ENCODE measurements at regions of chrX and their contacts with region 1.

Region 1: GRCh38 chrX:102950908-102951866 is 14.1 kb downstream of the RAB40AL start:
- DNase-seq: peak; percentile 23
- CTCF ChIP-seq: peak; percentile 59

Region 2: GRCh38 chrX:102899940-102900916 is 51.0 kb before region 1 on chrX:
- CTCF ChIA-PET with region 1: interaction called, 12 read pairs
- POLR2A ChIA-PET with region 1: no interaction called
- DNase-seq: peak; percentile 18
- CTCF ChIP-seq: peak; percentile 61

Region 3: GRCh38 chrX:102934624-102935023 is 16.6 kb before region 1 on chrX:
- CTCF ChIA-PET with region 1: interaction called, 34 read pairs
- POLR2A ChIA-PET with region 1: no interaction called
- DNase-seq: peak; percentile 42
- CTCF ChIP-seq: peak; percentile 52

Region 4: DNA sequence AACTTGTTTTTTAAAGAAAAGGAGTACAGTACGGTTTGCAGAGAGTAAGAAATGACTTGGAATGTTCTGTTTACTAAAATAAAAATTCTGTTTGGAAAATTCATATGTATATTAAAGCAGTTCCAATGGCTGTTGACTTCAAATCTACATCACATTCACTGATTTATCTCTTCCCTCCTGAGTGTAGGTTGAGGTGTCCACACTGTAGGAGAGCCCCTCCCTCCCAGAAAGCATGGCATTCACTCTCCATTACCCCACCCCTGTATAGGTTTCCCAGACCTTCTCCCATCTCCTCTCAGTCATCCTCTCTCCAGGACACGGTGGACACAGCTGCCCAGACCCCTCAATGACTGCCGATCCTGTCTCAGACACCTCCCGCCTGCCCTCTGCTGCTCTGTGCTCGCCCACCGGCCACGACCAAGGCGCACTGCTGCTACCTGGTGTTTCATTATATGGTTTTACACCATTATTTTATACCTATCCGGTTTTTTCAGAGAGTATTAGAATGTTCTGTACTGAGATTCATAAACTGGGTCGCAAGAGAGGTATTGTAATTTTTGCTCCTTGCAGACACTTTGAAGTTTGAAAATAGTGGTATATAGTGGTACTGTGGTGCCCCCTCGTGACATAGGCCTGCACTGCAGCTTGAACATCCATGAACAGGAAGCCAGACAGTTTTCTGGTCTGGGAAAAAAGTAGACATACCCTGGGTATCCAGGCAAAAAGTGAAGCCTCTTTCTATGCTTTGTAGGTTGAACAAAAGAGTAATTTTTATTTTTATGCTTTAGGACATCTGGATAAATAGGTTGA is 225.0 kb after region 1 on chrX:
- CTCF ChIA-PET with region 1: interaction called, 10 read pairs
- POLR2A ChIA-PET with region 1: no interaction called
- DNase-seq: peak; percentile 53
- CTCF ChIP-seq: peak; percentile 52

Measured in GM10248 (cell line).